Calu3 (cell line): ENCODE measurements at regions of chr17 and their contacts with region 1.

Region 1: DNA sequence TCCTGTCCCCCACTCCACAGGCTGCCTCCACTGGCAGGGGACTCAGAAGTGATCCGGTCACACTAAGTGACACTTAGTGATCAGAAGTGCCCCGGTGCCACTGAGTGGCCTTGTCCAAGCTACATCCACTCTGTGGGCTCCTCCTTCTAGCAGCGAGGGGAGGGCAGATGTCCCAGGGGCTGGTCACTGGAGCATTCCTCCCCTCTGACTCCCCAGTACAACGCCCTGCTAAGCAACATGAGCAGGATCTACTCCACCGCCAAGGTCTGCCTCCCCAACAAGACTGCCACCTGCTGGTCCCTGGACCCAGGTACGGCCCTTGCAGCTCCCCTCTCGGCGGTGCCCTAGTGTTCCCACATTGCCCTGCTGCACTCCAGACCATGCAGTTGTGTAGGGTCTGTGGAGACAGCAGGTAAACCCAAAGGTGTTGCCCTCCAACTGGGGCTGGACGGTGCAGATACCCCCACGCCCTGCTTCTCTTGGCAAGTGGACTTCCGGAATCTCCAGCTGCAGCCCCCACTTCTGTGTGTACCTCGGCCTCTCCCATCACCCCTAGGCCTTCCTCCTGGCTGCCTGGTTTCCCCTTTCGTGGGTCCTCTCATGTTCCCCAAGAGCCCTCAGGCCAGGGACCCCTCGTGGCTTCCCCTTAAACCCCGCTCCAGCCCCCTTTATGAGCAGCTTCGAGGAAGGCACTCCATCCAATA is 2.1 kb downstream of the ACE start:
- DNase-seq: peak; percentile 89
- H3K4me3 Mint-ChIP-seq: no peak overlapping the region
- H3K27ac Mint-ChIP-seq: no peak overlapping the region
- H3K4me1 Mint-ChIP-seq: no peaks in the 10 kb centered on the region
- H3K27me3 Mint-ChIP-seq: no peaks in the 10 kb centered on the region
- CTCF ChIP-seq: peak; percentile 38

Region 2: DNA sequence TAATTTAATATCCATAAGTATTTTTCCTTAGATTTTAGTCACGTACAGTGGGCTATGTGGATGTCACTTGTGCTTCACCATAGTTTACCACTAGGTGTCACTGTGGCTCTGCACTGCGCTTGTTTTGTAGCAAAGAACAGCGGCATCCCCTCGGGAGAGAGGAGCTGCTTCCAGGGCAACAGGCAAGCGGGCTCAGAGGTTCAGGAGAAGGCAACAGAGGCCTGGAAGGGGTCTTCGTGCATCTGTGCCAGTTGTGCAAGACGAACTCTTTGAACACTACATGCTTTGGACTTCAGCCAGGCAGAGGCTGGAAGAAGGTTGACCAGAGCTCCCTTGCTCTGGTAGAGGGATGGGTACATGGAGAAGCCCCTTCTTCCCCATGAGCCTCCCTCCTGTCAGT is 53.5 kb before region 1 on chr17:
- CTCF ChIA-PET with region 1: interaction called, 50 read pairs
- intact Hi-C with region 1: loop called (anchors 1 kb)
- DNase-seq: peak; percentile 66
- H3K4me3 Mint-ChIP-seq: no peak overlapping the region
- H3K27ac Mint-ChIP-seq: no peak overlapping the region
- H3K4me1 Mint-ChIP-seq: no peaks in the 10 kb centered on the region
- H3K27me3 Mint-ChIP-seq: no peaks in the 10 kb centered on the region
- CTCF ChIP-seq: peak; percentile 84

Region 3: GRCh38 chr17:63455417-63455816 is 23.5 kb before region 1 on chr17:
- CTCF ChIA-PET with region 1: no interaction called
- intact Hi-C with region 1: no loop called
- DNase-seq: no peak
- H3K4me3 Mint-ChIP-seq: no peak overlapping the region
- H3K27ac Mint-ChIP-seq: no peak overlapping the region
- H3K4me1 Mint-ChIP-seq: peaks cover 9% of the 10 kb centered on the region
- H3K27me3 Mint-ChIP-seq: no peaks in the 10 kb centered on the region
- CTCF ChIP-seq: no peak